ENCODE measurements at regions of chr1 and their contacts with region 1.

Region 1: GRCh38 chr1:64136752-64137411 is 66.5 kb upstream of the UBE2U start:
- DNase-seq: peak; percentile 73 to 86
- ATAC-seq: peak; percentile 93
- H3K4me3 ChIP-seq: no peak overlapping the region
- H3K27ac ChIP-seq: no peak overlapping the region
- H3K4me1 ChIP-seq: peaks cover 0 to 4% of the 10 kb centered on the region in 2 donors
- H3K27me3 ChIP-seq: no peaks in the 10 kb centered on the region

Region 2: DNA sequence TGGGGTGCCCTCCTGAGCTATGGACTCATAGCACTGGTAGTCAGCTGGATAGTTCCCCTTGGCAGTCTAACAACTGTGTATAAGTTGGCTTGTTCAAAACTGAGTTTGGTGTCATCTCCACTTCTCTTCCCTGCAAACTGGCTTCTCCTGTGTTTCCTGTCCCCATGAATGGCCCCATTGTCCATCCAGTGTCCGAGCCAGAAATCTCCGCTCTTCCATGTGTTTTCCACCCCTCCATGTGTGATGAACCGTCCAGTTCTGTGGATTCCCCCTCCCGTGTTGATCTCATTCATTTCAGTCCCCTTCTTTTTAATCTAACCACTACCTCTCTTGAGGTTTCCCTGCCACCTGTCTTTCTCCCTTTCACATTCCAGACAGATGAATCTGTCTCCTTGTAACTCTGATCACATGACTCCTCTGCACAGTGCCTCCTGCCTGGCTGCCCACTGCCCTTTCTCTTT is 167.4 kb before region 1 on chr1:
- intact Hi-C with region 1: loop called in 1 of 2 experiments (anchors 5 kb)
- DNase-seq: no peak
- ATAC-seq: no peak
- H3K4me3 ChIP-seq: no peak overlapping the region
- H3K27ac ChIP-seq: peak overlapping the region; percentile 36 to 97
- H3K4me1 ChIP-seq: peaks cover 4 to 17% of the 10 kb centered on the region in 2 donors
- H3K27me3 ChIP-seq: no peaks in the 10 kb centered on the region

Region 3: GRCh38 chr1:64343105-64343887 is 206.4 kb after region 1 on chr1:
- intact Hi-C with region 1: no loop called
- DNase-seq: no peak
- ATAC-seq: no peak
- H3K4me3 ChIP-seq: no peak overlapping the region
- H3K27ac ChIP-seq: no peak overlapping the region
- H3K4me1 ChIP-seq: no peaks in the 10 kb centered on the region
- H3K27me3 ChIP-seq: no peaks in the 10 kb centered on the region